ENCODE measurements at regions of chr12 and their contacts with region 1.

Region 1: DNA sequence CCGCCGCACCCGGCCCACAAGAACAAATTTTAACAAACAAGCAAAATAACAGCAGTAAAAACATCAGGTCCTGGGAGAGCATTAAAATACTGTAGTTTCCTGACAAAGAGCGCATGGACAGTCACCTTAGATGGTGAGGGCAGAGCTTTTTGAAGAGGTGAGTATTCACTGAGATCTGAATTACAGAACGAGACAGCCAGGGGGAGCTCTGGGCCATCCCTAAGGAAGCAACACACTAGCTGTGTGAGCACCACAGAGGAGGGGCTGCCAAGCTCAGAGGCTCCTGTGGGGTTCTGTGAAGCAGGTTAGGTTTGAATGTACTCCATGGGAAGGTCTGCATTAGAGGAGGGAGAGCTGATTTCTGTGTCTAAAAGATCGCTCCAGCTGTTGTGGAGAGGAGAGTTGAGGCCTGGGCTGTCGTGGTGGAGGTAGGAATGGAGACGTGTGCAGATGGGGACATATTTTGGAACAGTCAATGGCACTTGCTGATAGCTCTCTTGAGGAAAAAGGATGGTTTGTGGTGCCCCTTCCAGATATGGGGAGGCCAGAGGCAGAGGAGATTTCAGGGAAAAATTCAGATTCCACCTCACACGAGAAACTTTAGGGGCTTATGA is 72.9 kb downstream of the TRAFD1 start:
- DNase-seq: peak; percentile 41
- ATAC-seq: peak; percentile 99
- H3K4me3 ChIP-seq: no peak overlapping the region
- H3K27ac ChIP-seq: no peak overlapping the region
- H3K4me1 ChIP-seq: no peaks in the 10 kb centered on the region
- H3K27me3 ChIP-seq: no peaks in the 10 kb centered on the region
- CTCF ChIP-seq: peak; percentile 66 to 77 (median 71); a peak in 5 of 6 replicates
- POLR2A ChIP-seq: no peak
- RAD21 ChIP-seq: peak; percentile 75

Region 2: DNA sequence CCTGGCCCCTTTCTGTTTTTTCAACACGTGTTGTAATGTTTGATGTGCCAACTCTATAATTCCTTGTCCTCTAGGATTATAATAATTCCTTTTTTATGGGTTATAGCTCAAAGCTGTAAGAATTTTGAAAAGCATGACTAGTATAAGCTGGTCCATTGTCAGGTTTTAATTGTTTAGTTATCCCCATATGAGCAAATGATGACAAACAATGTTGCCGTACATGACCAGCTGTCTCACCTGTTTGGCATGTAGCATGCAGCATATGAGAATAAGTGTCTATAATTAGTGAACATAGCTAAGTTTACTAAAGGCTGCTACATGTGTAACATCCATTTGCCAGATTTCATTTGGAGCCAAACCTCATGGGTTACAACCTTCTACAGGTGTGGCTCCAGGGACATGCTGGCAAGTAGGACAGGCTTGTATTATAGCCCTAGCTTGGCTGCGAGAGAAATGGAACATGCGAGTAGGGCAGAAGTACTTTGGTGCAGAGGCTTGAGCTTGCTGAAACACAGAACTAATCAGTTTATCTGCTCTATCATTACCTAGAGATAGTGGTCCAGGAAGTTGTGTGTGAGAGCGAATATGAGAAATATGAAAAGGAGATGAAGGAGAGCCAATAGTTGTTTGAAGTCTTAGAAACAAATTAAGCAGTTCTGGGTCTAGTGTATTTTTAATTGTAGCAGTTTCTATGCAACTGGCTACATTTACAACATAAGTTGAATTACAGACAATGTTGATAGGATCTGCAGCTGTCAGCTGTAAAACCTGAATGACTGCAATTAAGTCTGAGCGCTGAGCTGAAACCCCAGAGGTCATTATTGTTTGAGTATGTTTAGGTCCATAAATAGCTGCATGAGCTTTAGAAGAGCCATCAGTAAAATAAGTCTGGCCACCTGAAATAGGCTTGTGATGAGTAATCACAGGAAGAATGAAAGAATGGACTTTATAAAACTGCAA is 378.8 kb before region 1 on chr12:
- CTCF ChIA-PET with region 1: no interaction called
- POLR2A ChIA-PET with region 1: no interaction called
- RAD21 ChIA-PET with region 1: no interaction called
- intact Hi-C with region 1: loop called (anchors 10 kb)
- DNase-seq: no peak
- ATAC-seq: no peak
- H3K4me3 ChIP-seq: no peak overlapping the region
- H3K27ac ChIP-seq: no peak overlapping the region
- H3K4me1 ChIP-seq: no peaks in the 10 kb centered on the region
- H3K27me3 ChIP-seq: no peaks in the 10 kb centered on the region
- CTCF ChIP-seq: no peak
- POLR2A ChIP-seq: no peak
- RAD21 ChIP-seq: no peak

Region 3: GRCh38 chr12:112750971-112751370 is 552.7 kb after region 1 on chr12:
- CTCF ChIA-PET with region 1: no interaction called
- POLR2A ChIA-PET with region 1: no interaction called
- RAD21 ChIA-PET with region 1: no interaction called
- intact Hi-C with region 1: no loop called
- DNase-seq: no peak
- ATAC-seq: no peak
- H3K4me3 ChIP-seq: no peak overlapping the region
- H3K27ac ChIP-seq: no peak overlapping the region
- H3K4me1 ChIP-seq: no peaks in the 10 kb centered on the region
- H3K27me3 ChIP-seq: peaks cover 80% of the 10 kb centered on the region
- CTCF ChIP-seq: no peak
- POLR2A ChIP-seq: no peak
- RAD21 ChIP-seq: no peak

Measured in HCT116 (cell line).